MCF 10A (cell line): ENCODE measurements at regions of chr6 and their contacts with region 1.

Region 1: DNA sequence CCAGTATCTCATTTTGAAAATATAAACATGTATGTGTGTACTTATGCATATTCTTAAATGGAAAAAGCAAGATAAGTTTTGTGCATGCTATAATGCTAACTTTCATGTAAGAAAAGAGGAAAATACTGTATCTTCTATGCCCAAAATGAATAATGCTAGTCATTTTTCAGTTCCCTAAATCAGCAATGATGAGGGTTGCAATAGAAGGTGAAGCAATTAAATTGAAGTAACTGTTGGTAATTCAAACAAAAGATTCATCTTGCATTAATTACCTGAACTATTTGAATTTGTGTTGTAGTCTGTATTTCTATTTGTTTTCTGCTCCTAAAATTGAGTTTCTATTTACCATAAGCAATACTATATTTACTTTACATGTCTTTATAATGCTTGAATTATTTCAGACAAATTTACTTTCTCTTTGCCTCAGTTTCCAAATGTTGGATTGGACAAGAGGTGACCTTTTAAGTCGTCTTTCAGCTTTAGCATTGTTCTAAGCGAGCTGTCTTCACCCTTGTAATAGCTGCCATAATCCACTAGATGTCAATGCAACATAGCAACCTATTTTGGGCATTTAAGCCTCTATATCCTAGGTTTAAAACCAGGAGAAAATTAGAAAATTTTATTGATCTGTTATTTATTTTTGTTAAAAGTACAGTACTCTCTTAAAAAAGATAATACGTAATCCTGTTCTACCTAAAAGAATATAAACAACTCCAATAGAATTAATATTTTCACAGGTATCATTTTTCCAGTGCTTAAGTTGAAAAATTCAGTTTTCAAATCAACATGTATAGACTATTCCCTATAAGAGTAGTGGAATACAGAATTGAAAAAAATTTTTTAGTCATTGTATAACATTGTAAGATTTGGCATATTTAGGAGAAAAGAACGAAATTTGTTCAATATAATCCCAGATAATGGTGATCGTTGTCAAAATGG is 52.3 kb upstream of the IFNGR1 start:
- DNase-seq: peak; percentile 71
- H3K4me3 Mint-ChIP-seq: no peak overlapping the region
- H3K27ac Mint-ChIP-seq: no peak overlapping the region
- H3K4me1 Mint-ChIP-seq: peaks cover 19% of the 10 kb centered on the region
- H3K27me3 Mint-ChIP-seq: no peaks in the 10 kb centered on the region
- CTCF ChIP-seq: peak; percentile 81

Region 2: DNA sequence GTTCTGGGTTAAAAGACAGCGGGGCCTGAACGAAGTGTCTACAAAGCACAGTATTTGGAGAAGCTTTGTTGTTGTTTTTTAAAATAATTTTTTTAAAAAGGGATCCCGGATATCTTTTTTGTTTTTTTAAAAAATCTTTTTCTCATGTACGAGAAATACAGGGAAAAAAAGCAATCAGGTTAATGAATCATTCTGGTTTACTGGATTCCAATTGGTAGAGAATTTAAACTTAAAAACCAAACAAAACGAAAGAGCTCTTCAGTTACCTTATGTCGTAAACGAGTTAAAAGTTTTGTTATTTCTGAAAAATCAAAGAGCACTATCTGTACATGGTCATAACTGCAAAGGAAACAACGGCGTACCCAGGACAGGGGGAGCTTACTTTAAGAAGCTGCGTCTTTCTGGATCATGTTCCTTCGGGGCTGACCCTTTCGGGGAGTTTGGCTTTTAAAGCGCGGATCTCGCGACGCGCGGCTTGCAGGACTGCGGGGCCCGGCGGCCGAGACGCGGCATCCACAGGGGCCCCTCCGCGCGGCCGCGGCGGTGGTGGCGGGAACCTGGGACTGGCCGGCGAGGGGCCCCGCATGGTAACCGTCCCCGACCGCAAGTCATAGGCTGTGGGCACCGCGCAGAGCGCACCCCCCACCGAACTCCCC is 227.7 kb before region 1 on chr6:
- CTCF ChIA-PET with region 1: no interaction called
- POLR2A ChIA-PET with region 1: no interaction called
- intact Hi-C with region 1: no loop called
- DNase-seq: peak; percentile 63
- H3K4me3 Mint-ChIP-seq: peak overlapping the region; percentile 90
- H3K27ac Mint-ChIP-seq: peak overlapping the region; percentile 89
- H3K4me1 Mint-ChIP-seq: peaks cover 6% of the 10 kb centered on the region
- H3K27me3 Mint-ChIP-seq: no peaks in the 10 kb centered on the region
- CTCF ChIP-seq: no peak

Region 3: DNA sequence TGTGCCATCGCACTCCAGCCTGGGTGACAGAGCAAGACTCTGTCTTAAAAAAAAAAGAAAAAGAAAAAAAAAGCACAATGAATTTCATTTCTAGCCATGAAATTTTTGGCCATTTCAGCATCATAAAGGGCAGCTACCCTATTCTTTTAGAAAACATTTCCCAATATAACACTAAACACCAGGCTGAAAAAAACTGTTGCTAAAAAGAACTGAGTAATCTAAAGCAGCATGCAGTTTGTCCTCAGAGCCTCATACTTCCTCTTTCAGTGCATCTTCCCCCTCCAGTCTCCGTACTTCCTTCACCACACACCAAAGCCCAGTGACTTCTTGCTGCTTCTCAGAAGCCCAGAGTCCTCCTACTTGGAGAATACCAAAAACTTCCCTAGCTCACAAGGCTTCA is 46.7 kb before region 1 on chr6:
- CTCF ChIA-PET with region 1: interaction called, 12 read pairs
- POLR2A ChIA-PET with region 1: interaction called, 5 read pairs
- intact Hi-C with region 1: no loop called
- DNase-seq: no peak
- H3K4me3 Mint-ChIP-seq: no peak overlapping the region
- H3K27ac Mint-ChIP-seq: no peak overlapping the region
- H3K4me1 Mint-ChIP-seq: peaks cover 21% of the 10 kb centered on the region
- H3K27me3 Mint-ChIP-seq: no peaks in the 10 kb centered on the region
- CTCF ChIP-seq: no peak

Region 4: GRCh38 chr6:137416376-137417109 is 145.0 kb after region 1 on chr6:
- CTCF ChIA-PET with region 1: no interaction called
- POLR2A ChIA-PET with region 1: no interaction called
- intact Hi-C with region 1: loop called (anchors 1 kb)
- DNase-seq: no peak
- H3K4me3 Mint-ChIP-seq: no peak overlapping the region
- H3K27ac Mint-ChIP-seq: no peak overlapping the region
- H3K4me1 Mint-ChIP-seq: peaks cover 6% of the 10 kb centered on the region
- H3K27me3 Mint-ChIP-seq: no peaks in the 10 kb centered on the region
- CTCF ChIP-seq: no peak

Region 5: GRCh38 chr6:138499303-138500018 is 1227.9 kb after region 1 on chr6 and contains the start of gene NHSL1:
- CTCF ChIA-PET with region 1: no interaction called
- POLR2A ChIA-PET with region 1: no interaction called
- intact Hi-C with region 1: no loop called
- DNase-seq: no peak
- H3K4me3 Mint-ChIP-seq: no peak within 1 kb of the TSS
- H3K27ac Mint-ChIP-seq: peak within 1 kb of the TSS; percentile 6
- H3K4me1 Mint-ChIP-seq: peaks cover 8% of the 10 kb centered on the region
- H3K27me3 Mint-ChIP-seq: no peaks in the 10 kb centered on the region
- CTCF ChIP-seq: no peak
- total RNA-seq, gene NHSL1: 23.9 and 32.1 TPM in 2 replicates